B cell (primary cell): ENCODE measurements at regions of chrX and their contacts with region 1.

Region 1: GRCh38 chrX:71565474-71566041 is 12.7 kb upstream of the GCNA start:
- DNase-seq: no peak
- ATAC-seq: no peak
- H3K4me3 ChIP-seq: no peak overlapping the region
- H3K4me3 Mint-ChIP-seq: no peak overlapping the region
- H3K27ac ChIP-seq: no peak overlapping the region
- H3K27ac Mint-ChIP-seq: no peak overlapping the region
- H3K4me1 ChIP-seq: no peaks in the 10 kb centered on the region
- H3K4me1 Mint-ChIP-seq: no peaks in the 10 kb centered on the region
- H3K27me3 ChIP-seq: no peaks in the 10 kb centered on the region
- H3K27me3 Mint-ChIP-seq: no peaks in the 10 kb centered on the region
- CTCF ChIP-seq: no peak

Region 2: GRCh38 chrX:71269801-71270395 is 295.7 kb before region 1 on chrX:
- CTCF ChIA-PET with region 1: no interaction called
- POLR2A ChIA-PET with region 1: no interaction called
- intact Hi-C with region 1: no loop called
- DNase-seq: no peak
- ATAC-seq: no peak
- H3K4me3 ChIP-seq: no peak overlapping the region
- H3K4me3 Mint-ChIP-seq: no peak overlapping the region
- H3K27ac ChIP-seq: no peak overlapping the region
- H3K27ac Mint-ChIP-seq: no peak overlapping the region
- H3K4me1 ChIP-seq: no peaks in the 10 kb centered on the region
- H3K4me1 Mint-ChIP-seq: no peaks in the 10 kb centered on the region
- H3K27me3 ChIP-seq: no peaks in the 10 kb centered on the region
- H3K27me3 Mint-ChIP-seq: no peaks in the 10 kb centered on the region
- CTCF ChIP-seq: no peak

Region 3: DNA sequence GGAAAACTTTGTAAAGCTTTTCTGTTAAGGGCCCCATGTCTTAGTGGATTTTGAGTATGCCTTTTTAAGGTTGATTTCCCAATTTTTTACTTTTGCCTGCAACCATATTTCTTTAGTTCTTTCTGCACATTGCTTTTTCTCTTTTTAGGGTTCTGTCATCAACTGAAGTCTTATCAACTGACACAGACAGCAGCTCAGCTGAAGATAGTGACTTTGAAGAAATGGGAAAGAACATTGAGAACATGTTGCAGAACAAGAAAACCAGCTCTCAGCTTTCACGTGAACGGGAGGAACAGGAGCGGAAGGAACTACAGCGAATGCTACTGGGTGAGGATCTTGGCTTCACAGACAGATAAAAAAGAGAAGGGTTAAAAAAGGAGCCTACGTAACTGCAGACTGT is 171.6 kb before region 1 on chrX:
- CTCF ChIA-PET with region 1: interaction called, 3 read pairs
- POLR2A ChIA-PET with region 1: no interaction called
- intact Hi-C with region 1: loop called (anchors 10 kb)
- DNase-seq: no peak
- ATAC-seq: no peak
- H3K4me3 ChIP-seq: no peak overlapping the region
- H3K4me3 Mint-ChIP-seq: no peak overlapping the region
- H3K27ac ChIP-seq: no peak overlapping the region
- H3K27ac Mint-ChIP-seq: no peak overlapping the region
- H3K4me1 ChIP-seq: no peaks in the 10 kb centered on the region
- H3K4me1 Mint-ChIP-seq: no peaks in the 10 kb centered on the region
- H3K27me3 ChIP-seq: no peaks in the 10 kb centered on the region
- H3K27me3 Mint-ChIP-seq: no peaks in the 10 kb centered on the region
- CTCF ChIP-seq: no peak